Ascending aorta (tissue), 2 donors: ENCODE measurements at regions of chr11 and their contacts with region 1.

Region 1: DNA sequence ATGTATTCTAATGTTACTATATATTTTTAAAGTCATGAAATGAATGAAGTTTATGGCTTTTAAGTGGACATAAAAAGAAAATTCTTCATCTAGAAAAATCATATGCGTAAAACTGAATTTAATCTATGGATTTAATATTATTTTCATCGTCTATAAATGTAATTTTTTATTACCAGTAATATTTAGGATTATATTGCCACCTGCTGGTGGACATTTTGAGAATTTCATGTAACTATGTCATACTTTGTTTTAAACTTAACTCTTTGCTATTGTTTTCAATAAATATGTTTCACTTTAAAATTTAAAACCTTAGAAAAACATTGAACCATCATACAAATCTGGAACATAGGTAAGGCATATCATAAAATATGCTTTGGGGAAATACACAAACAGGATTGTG is 66.5 kb upstream of the CEP126 start:
- DNase-seq: no peak
- H3K4me3 ChIP-seq: no peak overlapping the region
- H3K27ac ChIP-seq: no peak overlapping the region
- H3K4me1 ChIP-seq: no peaks in the 10 kb centered on the region
- H3K27me3 ChIP-seq: no peaks in the 10 kb centered on the region
- CTCF ChIP-seq: peak; percentile 8 to 42 (median 27)

Region 2: DNA sequence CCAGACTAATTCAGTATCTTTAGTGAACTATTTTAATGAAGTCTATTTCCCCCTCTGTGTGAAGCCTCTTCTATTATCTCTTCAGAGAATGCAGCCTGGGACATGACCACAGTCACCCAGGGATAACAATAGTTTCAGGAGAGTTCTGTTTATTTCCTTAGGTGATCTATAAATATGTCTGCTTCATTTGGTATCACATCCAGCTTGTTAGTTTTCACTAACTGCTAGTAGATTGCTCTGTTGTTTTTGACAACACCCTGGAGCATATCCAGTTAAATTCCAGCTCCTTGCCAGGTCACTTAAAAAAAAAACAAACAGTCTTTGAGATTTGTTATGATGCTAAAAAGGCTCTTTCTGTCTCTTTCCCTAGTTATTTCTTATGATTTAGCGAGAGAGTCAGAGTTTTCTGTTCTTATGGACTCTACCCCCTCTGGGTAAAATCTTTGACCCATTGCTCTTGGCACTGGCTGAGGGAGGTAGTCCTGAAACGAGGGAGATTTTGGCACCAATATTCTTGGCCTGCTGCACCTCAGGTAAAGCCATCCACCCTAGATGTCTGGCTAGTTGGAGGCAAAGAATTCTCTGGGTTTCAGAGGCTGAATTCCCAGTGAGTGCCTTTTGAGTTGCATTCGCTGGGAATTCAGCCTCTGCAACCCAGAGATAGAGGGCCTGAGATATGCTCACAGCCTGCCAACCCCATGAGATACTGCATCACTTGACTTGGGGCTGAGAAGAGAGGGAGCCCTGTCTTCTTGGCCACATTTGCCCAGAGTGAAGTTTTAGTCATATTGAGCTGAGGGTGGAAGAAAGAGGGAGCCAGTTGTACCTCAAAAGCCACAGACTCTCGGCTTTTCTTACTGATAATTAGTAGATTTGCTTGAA is 877.7 kb before region 1 on chr11:
- intact Hi-C with region 1: loop called (anchors 10 kb)
- DNase-seq: no peak
- H3K4me3 ChIP-seq: no peak overlapping the region
- H3K27ac ChIP-seq: no peak overlapping the region
- H3K4me1 ChIP-seq: no peaks in the 10 kb centered on the region
- H3K27me3 ChIP-seq: no peaks in the 10 kb centered on the region
- CTCF ChIP-seq: no peak

Region 3: DNA sequence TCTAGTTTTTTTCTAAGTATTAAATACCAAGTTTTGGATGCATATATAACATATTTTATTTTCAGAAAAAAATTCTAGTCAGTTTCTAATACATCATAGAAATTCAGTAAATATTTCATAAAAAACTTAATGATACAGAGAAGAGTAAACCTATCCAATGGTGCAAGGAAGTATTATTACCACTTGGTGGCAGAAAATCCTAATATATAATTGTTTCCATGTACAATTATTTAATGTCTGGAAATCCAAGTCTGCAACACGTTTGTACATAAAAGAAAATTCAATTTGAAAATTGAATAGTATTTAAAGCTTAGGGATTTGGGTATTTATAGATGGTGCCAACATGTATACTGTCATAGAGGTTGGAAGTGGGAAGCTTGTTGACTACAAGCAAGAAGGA is 391.4 kb before region 1 on chr11:
- intact Hi-C with region 1: loop called (anchors 5 kb)
- DNase-seq: no peak
- H3K4me3 ChIP-seq: no peak overlapping the region
- H3K27ac ChIP-seq: no peak overlapping the region
- H3K4me1 ChIP-seq: no peaks in the 10 kb centered on the region
- H3K27me3 ChIP-seq: no peaks in the 10 kb centered on the region
- CTCF ChIP-seq: peak in 2 of 3 experiments; percentile 13 to 39

Region 4: GRCh38 chr11:101748572-101749344 is 99.5 kb before region 1 on chr11:
- intact Hi-C with region 1: no loop called
- DNase-seq: no peak
- H3K4me3 ChIP-seq: no peak overlapping the region
- H3K27ac ChIP-seq: no peak overlapping the region
- H3K4me1 ChIP-seq: no peaks in the 10 kb centered on the region
- H3K27me3 ChIP-seq: no peaks in the 10 kb centered on the region
- CTCF ChIP-seq: no peak